ENCODE measurements at regions of chr1 and their contacts with region 1.

Region 1: GRCh38 chr1:7454895-7455784 is 316.0 kb upstream of the VAMP3 start:
- DNase-seq: no peak

Region 2: DNA sequence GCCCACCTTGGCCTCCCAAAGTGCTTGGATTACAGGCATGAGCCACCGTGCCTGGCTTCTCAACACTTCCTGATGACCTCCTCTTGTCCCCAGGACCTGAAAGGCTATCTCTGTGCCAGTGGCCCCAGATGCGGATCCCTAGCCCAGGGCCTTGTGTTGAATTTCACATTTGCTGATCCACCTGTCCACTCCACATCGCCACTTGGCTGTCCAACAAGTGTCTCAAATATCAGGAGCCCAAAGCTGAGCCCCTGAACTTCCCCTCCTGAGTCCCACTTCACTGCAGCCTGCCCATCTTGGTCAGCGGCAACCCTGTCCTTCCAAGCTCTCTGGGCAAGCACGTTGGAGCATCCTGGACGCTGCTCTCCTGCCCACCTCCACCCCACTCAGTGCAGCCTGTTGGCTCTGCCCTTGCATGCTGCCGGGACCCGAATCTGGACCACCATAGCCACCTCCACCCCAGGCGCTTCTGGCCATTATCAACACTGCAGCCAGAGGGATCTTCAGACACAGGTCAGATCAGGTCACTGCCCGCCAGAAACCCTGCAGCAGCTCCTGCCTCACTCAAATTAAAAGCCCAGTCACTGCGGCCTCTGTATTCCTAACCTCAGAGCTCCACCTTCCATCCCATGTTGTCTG is 36.6 kb before region 1 on chr1:
- intact Hi-C with region 1: no loop called
- DNase-seq: peak; percentile 63

Region 3: DNA sequence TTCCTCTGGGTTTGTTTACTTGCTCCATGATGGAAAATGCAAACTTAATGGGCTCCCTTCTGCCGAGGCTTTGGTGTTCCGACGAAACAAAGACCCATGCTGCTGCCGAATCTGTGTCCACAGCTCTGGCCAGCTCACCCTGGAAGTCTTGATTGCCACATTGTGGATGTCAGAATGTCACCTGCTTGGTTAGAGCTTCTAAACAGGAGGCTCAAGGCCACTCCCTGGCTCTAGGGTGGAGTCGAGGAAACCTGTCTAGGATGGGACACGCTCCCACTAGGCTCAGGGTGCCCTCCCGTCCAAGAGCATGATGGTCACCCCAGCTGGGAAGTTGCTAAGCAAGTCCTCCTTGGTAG is 36.7 kb after region 1 on chr1:
- intact Hi-C with region 1: loop called in 1 of 2 experiments (anchors 1 kb)
- DNase-seq: no peak